Activated naive CD4-positive, alpha-beta T cell treated with anti-CD3 and anti-CD28 coated beads for 36 hours (primary cell): ENCODE measurements at regions of chr6 and their contacts with region 1.

Region 1: GRCh38 chr6:14075095-14075503 is 42.5 kb upstream of the CD83 start:
- DNase-seq: peak; percentile 29
- H3K4me3 Mint-ChIP-seq: peak overlapping the region; percentile 46
- H3K27ac Mint-ChIP-seq: peak overlapping the region; percentile 73
- H3K4me1 Mint-ChIP-seq: peaks cover 53% of the 10 kb centered on the region
- H3K27me3 Mint-ChIP-seq: no peaks in the 10 kb centered on the region

Region 2: DNA sequence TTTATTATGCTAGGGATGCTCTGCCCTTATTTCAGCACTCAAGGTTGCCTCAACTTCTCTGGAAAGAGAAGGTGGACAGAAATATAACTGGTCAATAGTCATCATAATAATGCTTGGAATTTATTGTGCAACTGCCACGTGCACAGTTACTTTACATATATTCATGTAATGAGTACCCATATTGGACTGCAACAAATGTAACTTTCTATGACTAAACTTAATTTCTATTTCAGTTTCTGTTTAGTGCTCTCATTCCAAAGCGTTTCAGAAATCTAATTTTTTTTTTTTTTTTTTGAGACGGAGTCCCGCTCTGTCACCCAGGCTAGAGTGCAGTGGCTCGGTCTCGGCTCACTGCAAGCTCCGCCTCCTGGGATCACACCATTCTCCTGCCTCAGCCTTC is 14.1 kb after region 1 on chr6:
- CTCF ChIA-PET with region 1: no interaction called
- intact Hi-C with region 1: loop called (anchors 1 kb)
- DNase-seq: no peak
- H3K4me3 Mint-ChIP-seq: no peak overlapping the region
- H3K27ac Mint-ChIP-seq: no peak overlapping the region
- H3K4me1 Mint-ChIP-seq: peaks cover 16% of the 10 kb centered on the region
- H3K27me3 Mint-ChIP-seq: peaks cover 4% of the 10 kb centered on the region

Region 3: GRCh38 chr6:14108571-14109410 is 33.7 kb after region 1 on chr6:
- CTCF ChIA-PET with region 1: interaction called, 8 read pairs
- intact Hi-C with region 1: loop called (anchors 1 kb)
- DNase-seq: peak; percentile 52
- H3K4me3 Mint-ChIP-seq: peak overlapping the region; percentile 30
- H3K27ac Mint-ChIP-seq: peak overlapping the region; percentile 78
- H3K4me1 Mint-ChIP-seq: peaks cover 31% of the 10 kb centered on the region
- H3K27me3 Mint-ChIP-seq: peaks cover 3% of the 10 kb centered on the region

Region 4: GRCh38 chr6:14117158-14118090 is 42.3 kb after region 1 on chr6 and contains the start of gene CD83:
- CTCF ChIA-PET with region 1: interaction called, 3 read pairs
- intact Hi-C with region 1: loop called (anchors 1 kb)
- DNase-seq: peak; percentile 75
- H3K4me3 Mint-ChIP-seq: peak within 1 kb of the TSS; percentile 93
- H3K27ac Mint-ChIP-seq: peak within 1 kb of the TSS; percentile 87
- H3K4me1 Mint-ChIP-seq: peaks cover 36% of the 10 kb centered on the region
- H3K27me3 Mint-ChIP-seq: peaks cover 2% of the 10 kb centered on the region
- total RNA-seq, gene CD83: 11.9 to 13.8 TPM